ENCODE measurements at regions of chr3 and their contacts with region 1.

Region 1: GRCh38 chr3:66693461-66694031 is 192.7 kb upstream of the LRIG1 start:
- DNase-seq: peak; percentile 44
- H3K4me3 ChIP-seq: no peak overlapping the region
- H3K27ac ChIP-seq: peak overlapping the region; percentile 46 to 78 (median 74)
- H3K4me1 ChIP-seq: peaks cover 12 to 33% (median 17%) of the 10 kb centered on the region in 4 donors
- H3K27me3 ChIP-seq: no peaks in the 10 kb centered on the region
- CTCF ChIP-seq: no peak
- EP300 ChIP-seq: no peak
- POLR2A ChIP-seq: no peak

Region 2: GRCh38 chr3:66615643-66616301 is 77.8 kb before region 1 on chr3:
- in situ Hi-C with region 1: no loop called
- intact Hi-C with region 1: no loop called
- DNase-seq: no peak
- H3K4me3 ChIP-seq: no peak overlapping the region
- H3K27ac ChIP-seq: peak overlapping the region in 3 of 4 donors; percentile 19 to 73 (median 27)
- H3K4me1 ChIP-seq: no peaks in the 10 kb centered on the region
- H3K27me3 ChIP-seq: no peaks in the 10 kb centered on the region
- CTCF ChIP-seq: no peak
- EP300 ChIP-seq: no peak
- POLR2A ChIP-seq: no peak

Region 3: GRCh38 chr3:66822186-66823008 is 128.9 kb after region 1 on chr3:
- in situ Hi-C with region 1: no loop called
- intact Hi-C with region 1: loop called (anchors 5 kb)
- DNase-seq: peak; percentile 76
- H3K4me3 ChIP-seq: no peak overlapping the region
- H3K27ac ChIP-seq: no peak overlapping the region
- H3K4me1 ChIP-seq: no peaks in the 10 kb centered on the region
- H3K27me3 ChIP-seq: no peaks in the 10 kb centered on the region
- CTCF ChIP-seq: peak; percentile 72 to 77 (median 74)
- EP300 ChIP-seq: no peak
- POLR2A ChIP-seq: no peak

Region 4: DNA sequence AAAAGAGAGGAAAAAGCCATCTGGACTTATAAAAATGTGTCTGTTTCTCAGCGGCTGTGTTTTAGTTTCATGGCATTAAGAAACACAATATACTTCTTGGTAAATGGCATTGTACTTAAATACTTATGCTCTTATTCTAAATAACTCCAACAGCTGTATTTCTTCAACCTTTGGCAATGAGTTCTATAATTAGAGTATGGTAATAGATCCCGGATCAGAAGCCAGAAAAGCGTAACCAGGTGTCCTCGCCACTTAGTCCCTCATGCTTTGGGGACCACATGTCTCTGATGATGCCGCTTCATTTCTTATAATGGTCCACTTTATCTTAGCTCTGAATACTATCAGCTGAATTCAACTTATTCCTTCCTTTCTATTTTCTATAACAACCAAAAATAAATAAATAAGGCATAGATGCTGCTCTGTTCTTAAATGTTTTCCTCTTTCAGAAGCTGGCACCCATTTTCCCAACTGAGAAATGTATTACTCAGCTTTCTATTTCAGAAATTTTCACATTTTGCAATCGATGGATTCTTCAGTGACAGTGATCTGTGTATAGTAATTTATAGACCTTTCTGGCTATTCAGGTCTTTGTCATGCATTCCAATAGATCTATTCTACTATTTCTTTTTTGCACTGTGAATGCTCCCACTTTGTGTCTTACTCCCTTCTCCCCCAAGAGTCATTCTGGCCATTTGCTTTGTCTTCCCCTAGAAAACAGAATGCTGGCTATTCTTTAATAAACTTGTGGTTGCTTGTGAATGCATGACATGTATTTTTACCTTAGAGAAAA is 216.9 kb after region 1 on chr3:
- in situ Hi-C with region 1: no loop called
- intact Hi-C with region 1: no loop called
- DNase-seq: no peak
- H3K4me3 ChIP-seq: no peak overlapping the region
- H3K27ac ChIP-seq: no peak overlapping the region
- H3K4me1 ChIP-seq: no peaks in the 10 kb centered on the region
- H3K27me3 ChIP-seq: peaks cover 6% of the 10 kb centered on the region
- CTCF ChIP-seq: no peak
- EP300 ChIP-seq: no peak
- POLR2A ChIP-seq: no peak

Region 5: DNA sequence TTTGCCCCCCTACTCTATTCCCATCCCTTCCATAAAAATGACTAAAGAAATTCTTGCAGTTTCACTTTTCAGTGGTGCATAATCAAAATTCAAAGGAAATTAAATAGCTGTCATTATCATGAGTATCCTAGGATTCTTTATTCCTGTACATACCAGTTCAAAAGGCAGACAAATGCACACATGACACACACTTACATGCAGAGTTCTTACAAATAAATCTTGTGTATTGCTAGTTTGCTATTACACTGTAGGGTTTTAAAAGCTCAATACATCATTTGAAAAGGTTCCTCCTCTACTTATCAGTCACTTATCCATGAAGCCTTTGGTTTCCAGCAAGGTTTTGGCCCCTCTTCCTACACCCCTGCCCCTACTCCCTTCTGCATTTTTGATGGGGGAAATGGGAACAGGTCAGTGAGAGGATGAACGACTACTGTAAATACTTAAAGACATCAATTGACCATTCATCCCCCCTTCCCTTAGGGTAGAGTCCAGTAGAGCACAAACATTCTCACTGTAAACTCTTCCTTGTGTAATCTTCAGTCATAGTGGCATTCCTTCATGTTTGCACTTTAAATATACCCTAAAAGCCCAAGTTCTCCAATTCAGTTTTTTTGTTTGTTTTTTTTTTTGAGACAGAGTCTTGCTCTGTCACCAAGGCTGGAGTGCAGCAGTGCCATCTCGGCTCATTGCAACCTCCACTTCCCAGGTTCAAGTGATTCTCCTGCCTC is 868.3 kb after region 1 on chr3:
- in situ Hi-C with region 1: no loop called
- intact Hi-C with region 1: loop called (anchors 10 kb)
- DNase-seq: no peak
- H3K4me3 ChIP-seq: no peak overlapping the region
- H3K27ac ChIP-seq: no peak overlapping the region
- H3K4me1 ChIP-seq: peaks cover 0 to 6% (median 0%) of the 10 kb centered on the region in 4 donors
- H3K27me3 ChIP-seq: no peaks in the 10 kb centered on the region
- CTCF ChIP-seq: no peak
- EP300 ChIP-seq: no peak
- POLR2A ChIP-seq: no peak